ENCODE measurements at regions of chr3 and their contacts with region 1.

Region 1: DNA sequence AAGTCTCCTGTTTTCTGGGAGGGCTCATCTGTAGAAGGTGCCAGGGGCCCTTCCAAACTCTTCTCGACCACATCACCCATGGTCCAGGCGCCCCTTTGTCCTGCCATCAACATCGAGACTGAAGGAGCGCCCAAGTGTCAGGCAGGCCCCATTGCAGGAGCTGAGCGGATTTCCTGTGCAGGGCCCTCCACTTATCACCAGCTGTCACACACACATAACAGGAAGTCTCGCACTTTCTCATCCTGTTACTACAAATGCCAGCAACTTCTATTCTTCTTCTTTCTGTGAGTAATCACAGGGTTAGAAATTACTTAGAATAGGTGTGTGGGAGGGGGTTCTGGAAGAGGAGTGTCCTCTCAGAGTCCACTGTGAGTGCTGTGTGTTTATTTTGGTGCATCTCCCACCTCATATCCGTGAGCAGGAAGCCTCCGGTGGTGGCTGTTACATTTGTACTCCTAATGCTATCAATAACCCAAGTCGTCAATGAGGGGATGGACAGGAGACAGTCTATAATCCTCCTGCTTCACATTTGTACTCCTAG is at the start of gene KLHL6:
- DNase-seq: peak; percentile 89
- ATAC-seq: peak; percentile 85
- H3K4me3 Mint-ChIP-seq: peak within 1 kb of the TSS; percentile 97
- H3K27ac Mint-ChIP-seq: peak within 1 kb of the TSS; percentile 100
- H3K4me1 Mint-ChIP-seq: peaks cover 47% of the 10 kb centered on the region
- H3K27me3 Mint-ChIP-seq: no peaks in the 10 kb centered on the region
- total RNA-seq, gene KLHL6: 62.8 to 64.7 TPM

Region 2: DNA sequence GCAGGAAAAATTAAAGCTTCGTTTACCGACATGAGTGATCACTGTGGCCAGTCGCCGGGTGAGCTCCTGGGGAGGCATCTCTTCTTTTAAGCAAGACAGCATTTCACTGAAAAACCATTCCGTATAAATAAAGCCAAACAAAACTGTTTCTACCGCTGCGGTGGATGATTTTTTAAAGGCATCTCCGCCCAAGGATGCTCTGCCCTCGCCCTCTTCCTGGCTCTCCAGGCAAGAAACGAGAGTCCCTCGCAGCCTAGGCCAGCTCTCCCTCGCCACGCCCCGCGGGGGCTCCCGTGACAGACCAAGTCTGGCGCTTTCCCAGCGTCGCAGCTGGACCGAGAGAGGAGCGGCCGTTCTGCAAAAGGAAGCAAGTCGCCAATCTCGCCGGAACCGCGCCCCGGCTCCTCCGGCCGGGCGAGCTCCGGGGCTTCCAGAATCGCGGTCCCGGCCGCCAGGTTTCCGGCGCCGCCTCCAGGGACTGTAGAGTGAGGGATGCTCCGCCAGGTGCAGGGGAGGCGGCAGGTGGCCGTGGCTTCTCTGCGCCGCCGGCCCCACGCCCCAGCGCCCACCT is 127.7 kb before region 1 on chr3:
- CTCF ChIA-PET with region 1: no interaction called
- POLR2A ChIA-PET with region 1: no interaction called
- intact Hi-C with region 1: loop called in 1 of 2 experiments (anchors 1 kb)
- DNase-seq: peak; percentile 57
- ATAC-seq: peak; percentile 21
- H3K4me3 Mint-ChIP-seq: peak overlapping the region; percentile 79
- H3K27ac Mint-ChIP-seq: no peak overlapping the region
- H3K4me1 Mint-ChIP-seq: peaks cover 43% of the 10 kb centered on the region
- H3K27me3 Mint-ChIP-seq: peaks cover 11% of the 10 kb centered on the region

Region 3: DNA sequence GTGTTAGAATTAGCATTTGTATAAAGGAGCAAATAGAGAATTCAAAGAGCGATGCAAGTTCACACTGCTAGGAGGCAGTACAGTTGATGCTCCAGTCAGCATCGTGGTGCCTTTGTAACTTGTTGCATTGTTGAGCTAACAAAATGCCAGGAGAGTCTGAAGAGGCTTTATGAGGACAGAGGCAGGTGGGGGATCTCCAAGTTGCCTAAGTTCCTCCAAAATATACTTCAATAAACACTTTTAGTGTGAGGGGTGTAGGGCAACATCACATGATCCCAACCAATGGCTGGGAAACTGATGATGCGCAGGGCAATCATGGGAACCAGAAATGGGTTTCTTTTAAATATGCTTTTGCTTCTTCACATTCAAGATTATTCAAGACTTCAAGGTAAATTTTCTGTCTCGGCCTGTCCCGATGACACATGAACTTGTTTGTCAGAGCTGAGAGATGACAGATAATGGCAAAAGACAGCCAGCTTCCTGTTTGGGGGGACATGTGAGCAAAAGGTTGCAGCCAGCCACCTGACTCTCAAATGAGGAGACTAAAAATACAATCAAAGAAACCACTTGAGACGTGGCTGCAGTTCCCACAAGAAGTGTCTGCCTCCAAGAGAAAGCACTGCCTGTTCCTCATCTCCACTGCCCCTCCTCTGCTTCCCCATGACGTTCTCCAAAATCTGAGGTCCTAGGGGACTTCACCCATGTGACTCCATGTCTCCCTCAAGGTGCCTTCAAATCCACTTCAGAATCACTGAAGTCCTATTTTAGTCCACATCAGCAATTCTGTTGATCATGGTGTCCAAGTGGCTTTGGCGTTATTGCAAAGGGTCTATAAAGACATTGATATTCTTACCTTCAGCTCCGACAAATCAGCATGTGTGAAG is 39.4 kb before region 1 on chr3:
- CTCF ChIA-PET with region 1: no interaction called
- POLR2A ChIA-PET with region 1: interaction called, 7 read pairs
- intact Hi-C with region 1: loop called (anchors 1 kb)
- DNase-seq: peak; percentile 72
- ATAC-seq: peak; percentile 81
- H3K4me3 Mint-ChIP-seq: no peak overlapping the region
- H3K27ac Mint-ChIP-seq: peak overlapping the region; percentile 81
- H3K4me1 Mint-ChIP-seq: peaks cover 83% of the 10 kb centered on the region
- H3K27me3 Mint-ChIP-seq: no peaks in the 10 kb centered on the region

Region 4: GRCh38 chr3:183591881-183592521 is 36.4 kb after region 1 on chr3:
- CTCF ChIA-PET with region 1: interaction called, 4 read pairs
- POLR2A ChIA-PET with region 1: no interaction called
- intact Hi-C with region 1: loop called (anchors 1 to 2 kb)
- DNase-seq: no peak
- ATAC-seq: peak; percentile 48
- H3K4me3 Mint-ChIP-seq: no peak overlapping the region
- H3K27ac Mint-ChIP-seq: peak overlapping the region; percentile 75
- H3K4me1 Mint-ChIP-seq: peaks cover 42% of the 10 kb centered on the region
- H3K27me3 Mint-ChIP-seq: no peaks in the 10 kb centered on the region

Region 5: DNA sequence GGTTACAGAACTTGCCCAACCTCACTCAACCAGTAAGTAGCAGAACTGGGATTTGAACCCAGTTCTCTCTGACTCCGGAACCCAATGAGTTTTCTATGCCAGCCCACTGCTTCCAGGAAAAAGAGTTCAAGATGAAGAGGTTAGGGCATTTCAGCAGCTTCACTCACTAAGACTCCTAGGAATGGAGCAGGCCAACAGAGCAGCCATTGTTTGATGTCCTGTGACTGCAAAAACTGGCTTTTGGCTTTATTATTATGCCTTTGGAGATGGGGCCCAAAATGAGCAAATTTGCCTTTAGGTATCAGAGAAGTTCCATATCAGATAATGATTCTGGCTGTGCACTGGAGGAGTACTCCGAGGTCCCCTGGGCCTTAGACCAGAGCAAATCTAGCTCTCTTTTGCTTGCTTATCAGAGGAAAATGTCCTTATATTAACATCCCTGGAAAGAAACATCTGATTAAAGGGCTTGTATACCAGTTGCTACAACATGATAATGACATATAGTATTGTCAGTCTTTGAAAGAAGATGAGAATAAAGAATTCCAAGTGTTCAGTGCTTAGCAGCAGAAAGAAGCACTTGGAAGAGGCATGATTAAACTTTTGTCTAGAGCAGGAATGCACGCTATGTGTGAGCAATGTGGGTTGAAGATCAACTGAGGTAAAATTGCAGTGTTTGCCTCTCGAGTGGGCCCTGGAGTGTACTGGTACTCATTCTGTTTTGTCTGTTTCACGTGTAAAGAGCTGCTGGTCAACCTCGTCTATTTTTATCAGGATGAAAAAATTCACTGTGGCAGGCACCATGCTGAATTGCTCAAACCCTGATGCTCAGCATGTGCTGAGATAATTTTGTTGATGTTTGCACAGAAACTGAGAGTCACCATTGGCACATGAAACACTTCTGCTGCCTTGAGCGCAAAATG is 58.0 kb after region 1 on chr3:
- CTCF ChIA-PET with region 1: no interaction called
- POLR2A ChIA-PET with region 1: no interaction called
- intact Hi-C with region 1: no loop called
- DNase-seq: no peak
- ATAC-seq: no peak
- H3K4me3 Mint-ChIP-seq: no peak overlapping the region
- H3K27ac Mint-ChIP-seq: no peak overlapping the region
- H3K4me1 Mint-ChIP-seq: no peaks in the 10 kb centered on the region
- H3K27me3 Mint-ChIP-seq: peaks cover 3% of the 10 kb centered on the region

Region 6: GRCh38 chr3:183766745-183767606 is 211.4 kb after region 1 on chr3:
- CTCF ChIA-PET with region 1: no interaction called
- POLR2A ChIA-PET with region 1: no interaction called
- intact Hi-C with region 1: loop called (anchors 5 kb)
- DNase-seq: peak; percentile 85
- ATAC-seq: peak; percentile 95
- H3K4me3 Mint-ChIP-seq: no peak overlapping the region
- H3K27ac Mint-ChIP-seq: no peak overlapping the region
- H3K4me1 Mint-ChIP-seq: peaks cover 9% of the 10 kb centered on the region
- H3K27me3 Mint-ChIP-seq: no peaks in the 10 kb centered on the region

Region 7: GRCh38 chr3:184234224-184234623 is 678.6 kb after region 1 on chr3:
- CTCF ChIA-PET with region 1: no interaction called
- POLR2A ChIA-PET with region 1: no interaction called
- intact Hi-C with region 1: no loop called
- DNase-seq: no peak
- ATAC-seq: no peak
- H3K4me3 Mint-ChIP-seq: no peak overlapping the region
- H3K27ac Mint-ChIP-seq: no peak overlapping the region
- H3K4me1 Mint-ChIP-seq: peaks cover 4% of the 10 kb centered on the region
- H3K27me3 Mint-ChIP-seq: peaks cover 24% of the 10 kb centered on the region